Activated CD4-positive, alpha-beta memory T cell treated with anti-CD3 and anti-CD28 coated beads, Interleukin-2, amount 10 ng/mL, durations not matched to agents 7 days and 5 days (primary cell): ENCODE measurements at regions of chr10 and their contacts with region 1.

Region 1: GRCh38 chr10:73879296-73880173 is 5.2 kb upstream of the CAMK2G start:
- DNase-seq: peak; percentile 96
- H3K4me3 Mint-ChIP-seq: no peak overlapping the region
- H3K27ac Mint-ChIP-seq: peak overlapping the region; percentile 6
- H3K4me1 Mint-ChIP-seq: peaks cover 37% of the 10 kb centered on the region
- H3K27me3 Mint-ChIP-seq: peaks cover 5% of the 10 kb centered on the region

Region 2: GRCh38 chr10:73448384-73448783 is 431.2 kb before region 1 on chr10:
- CTCF ChIA-PET with region 1: no interaction called
- POLR2A ChIA-PET with region 1: no interaction called
- DNase-seq: no peak
- H3K4me3 Mint-ChIP-seq: no peak overlapping the region
- H3K27ac Mint-ChIP-seq: no peak overlapping the region
- H3K4me1 Mint-ChIP-seq: no peaks in the 10 kb centered on the region
- H3K27me3 Mint-ChIP-seq: no peaks in the 10 kb centered on the region

Region 3: DNA sequence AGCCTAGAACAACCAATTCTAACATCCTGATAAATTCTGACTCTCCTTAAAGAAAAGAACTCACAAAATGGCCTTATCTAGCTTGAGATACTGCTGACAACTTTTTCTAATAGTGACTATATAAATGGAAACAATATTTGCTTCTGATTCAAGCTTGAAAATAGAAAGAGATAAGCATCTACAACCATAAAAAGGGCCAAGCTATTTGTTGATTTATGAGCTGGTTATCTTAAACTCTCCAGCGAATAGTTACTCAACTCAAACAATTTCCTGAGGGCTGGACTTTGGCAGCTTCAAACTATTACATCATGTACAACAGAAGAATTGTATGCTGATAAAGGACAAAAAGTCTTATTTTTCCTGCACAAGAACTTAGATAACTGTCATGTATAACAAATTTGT is 293.0 kb before region 1 on chr10:
- CTCF ChIA-PET with region 1: no interaction called
- POLR2A ChIA-PET with region 1: no interaction called
- DNase-seq: no peak
- H3K4me3 Mint-ChIP-seq: no peak overlapping the region
- H3K27ac Mint-ChIP-seq: no peak overlapping the region
- H3K4me1 Mint-ChIP-seq: peaks cover 13% of the 10 kb centered on the region
- H3K27me3 Mint-ChIP-seq: no peaks in the 10 kb centered on the region

Region 4: DNA sequence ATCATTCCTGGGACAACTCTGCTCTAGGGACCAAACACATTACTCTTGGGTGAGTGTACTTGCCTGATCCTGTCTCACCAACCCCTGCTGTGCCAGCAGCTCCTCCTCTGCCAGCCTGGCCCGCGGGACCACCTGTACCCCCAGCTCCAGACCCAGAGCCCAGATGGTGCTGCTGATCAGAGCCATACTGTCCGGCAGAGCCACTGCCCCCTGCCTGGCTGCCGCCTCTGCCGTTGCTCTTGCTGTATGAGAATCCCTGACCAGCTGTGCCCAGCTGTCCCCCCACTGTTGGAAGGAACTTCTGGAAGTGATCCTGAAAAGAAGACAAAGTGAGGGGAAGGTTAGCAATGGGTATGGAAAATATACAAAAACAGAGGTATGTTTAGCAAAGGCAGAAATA is 245.1 kb before region 1 on chr10:
- CTCF ChIA-PET with region 1: no interaction called
- POLR2A ChIA-PET with region 1: no interaction called
- DNase-seq: no peak
- H3K4me3 Mint-ChIP-seq: no peak overlapping the region
- H3K27ac Mint-ChIP-seq: no peak overlapping the region
- H3K4me1 Mint-ChIP-seq: no peaks in the 10 kb centered on the region
- H3K27me3 Mint-ChIP-seq: no peaks in the 10 kb centered on the region

Region 5: DNA sequence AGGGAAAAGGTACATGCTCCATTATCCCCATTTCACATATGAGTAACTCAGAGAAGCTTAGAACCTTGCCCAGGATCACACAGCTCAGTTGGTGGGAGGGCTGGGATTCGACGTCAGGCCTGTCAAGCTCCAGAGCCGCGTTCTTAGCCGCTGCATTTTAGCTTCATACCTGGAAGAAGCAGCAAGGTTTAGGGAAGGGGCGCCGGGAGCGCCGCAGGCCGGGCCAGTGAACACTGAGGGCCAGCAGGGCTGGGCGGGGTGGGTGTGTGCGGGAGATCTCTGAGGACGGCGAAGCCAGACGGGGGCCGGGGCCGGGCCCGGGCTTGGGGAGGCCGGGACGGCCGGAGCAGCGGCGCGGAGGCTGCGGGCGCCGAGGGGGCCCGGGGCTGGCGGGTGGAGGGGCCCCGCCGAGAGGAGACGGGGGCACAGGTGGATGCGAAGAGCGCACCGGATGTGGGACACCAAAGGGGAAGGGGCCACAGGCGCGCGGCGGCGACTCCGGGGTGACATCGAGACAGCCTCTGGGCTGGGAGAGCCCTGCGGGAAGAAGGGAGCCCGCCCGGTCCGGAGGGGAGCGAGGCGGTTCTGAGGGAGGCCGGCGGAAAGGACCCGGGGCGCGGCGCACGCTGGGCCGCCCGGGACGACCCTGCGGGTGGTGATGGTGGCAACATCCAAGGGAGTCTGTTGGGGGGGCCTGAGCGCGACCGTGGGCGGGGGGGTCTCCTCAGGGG is 68.6 kb before region 1 on chr10:
- CTCF ChIA-PET with region 1: interaction called, 22 read pairs
- POLR2A ChIA-PET with region 1: interaction called, 3 read pairs
- DNase-seq: peak; percentile 66
- H3K4me3 Mint-ChIP-seq: peak overlapping the region; percentile 91
- H3K27ac Mint-ChIP-seq: peak overlapping the region; percentile 95
- H3K4me1 Mint-ChIP-seq: peaks cover 45% of the 10 kb centered on the region
- H3K27me3 Mint-ChIP-seq: no peaks in the 10 kb centered on the region

Region 6: GRCh38 chr10:73865459-73866442 is 13.8 kb before region 1 on chr10:
- CTCF ChIA-PET with region 1: interaction called, 111 read pairs
- POLR2A ChIA-PET with region 1: interaction called, 36 read pairs
- DNase-seq: peak; percentile 70
- H3K4me3 Mint-ChIP-seq: peak overlapping the region; percentile 80
- H3K27ac Mint-ChIP-seq: peak overlapping the region; percentile 99
- H3K4me1 Mint-ChIP-seq: peaks cover 86% of the 10 kb centered on the region
- H3K27me3 Mint-ChIP-seq: no peaks in the 10 kb centered on the region

Region 7: GRCh38 chr10:73931767-73932619 is 52.5 kb after region 1 on chr10:
- CTCF ChIA-PET with region 1: interaction called, 415 read pairs
- POLR2A ChIA-PET with region 1: interaction called, 5 read pairs
- DNase-seq: peak; percentile 72
- H3K4me3 Mint-ChIP-seq: no peak overlapping the region
- H3K27ac Mint-ChIP-seq: peak overlapping the region; percentile 73
- H3K4me1 Mint-ChIP-seq: peaks cover 22% of the 10 kb centered on the region
- H3K27me3 Mint-ChIP-seq: peaks cover 13% of the 10 kb centered on the region

Region 8: DNA sequence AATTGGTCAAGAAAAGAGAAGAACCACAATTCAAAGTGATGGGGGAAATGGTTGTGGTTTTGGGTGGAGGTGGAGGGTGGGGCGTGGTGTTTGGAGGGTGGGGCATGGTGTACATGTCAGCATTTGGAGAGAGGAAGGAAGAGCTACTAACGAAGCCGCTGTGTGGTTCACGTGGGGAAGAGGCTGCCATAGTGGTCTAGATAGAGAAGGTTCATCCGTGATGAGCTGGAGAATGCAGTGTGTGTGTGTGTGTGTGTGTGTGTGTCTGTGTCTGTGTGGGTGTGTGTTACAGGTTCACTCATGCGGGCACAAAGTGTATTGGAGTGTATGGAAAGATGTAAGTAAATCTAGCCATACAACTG is 112.3 kb after region 1 on chr10:
- CTCF ChIA-PET with region 1: interaction called, 10 read pairs
- POLR2A ChIA-PET with region 1: interaction called, 3 read pairs
- DNase-seq: peak; percentile 93
- H3K4me3 Mint-ChIP-seq: peak overlapping the region; percentile 24
- H3K27ac Mint-ChIP-seq: peak overlapping the region; percentile 84
- H3K4me1 Mint-ChIP-seq: peaks cover 57% of the 10 kb centered on the region
- H3K27me3 Mint-ChIP-seq: no peaks in the 10 kb centered on the region